ENCODE measurements at regions of chr17 and their contacts with region 1.

Region 1: GRCh38 chr17:68011199-68011665 is 15.0 kb upstream of the C17orf58 start:
- DNase-seq: peak in 8 of 9 experiments; percentile 45 to 75 (median 66)
- ATAC-seq: peak; percentile 57
- H3K4me3 ChIP-seq: peak overlapping the region; percentile 4 to 31
- H3K4me3 Mint-ChIP-seq: peak overlapping the region; percentile 50
- H3K27ac ChIP-seq: no peak overlapping the region
- H3K27ac Mint-ChIP-seq: no peak overlapping the region
- H3K4me1 ChIP-seq: no peaks in the 10 kb centered on the region
- H3K4me1 Mint-ChIP-seq: peaks cover 7% of the 10 kb centered on the region
- H3K27me3 ChIP-seq: no peaks in the 10 kb centered on the region
- H3K27me3 Mint-ChIP-seq: no peaks in the 10 kb centered on the region
- CTCF ChIP-seq: peak; percentile 77

Region 2: DNA sequence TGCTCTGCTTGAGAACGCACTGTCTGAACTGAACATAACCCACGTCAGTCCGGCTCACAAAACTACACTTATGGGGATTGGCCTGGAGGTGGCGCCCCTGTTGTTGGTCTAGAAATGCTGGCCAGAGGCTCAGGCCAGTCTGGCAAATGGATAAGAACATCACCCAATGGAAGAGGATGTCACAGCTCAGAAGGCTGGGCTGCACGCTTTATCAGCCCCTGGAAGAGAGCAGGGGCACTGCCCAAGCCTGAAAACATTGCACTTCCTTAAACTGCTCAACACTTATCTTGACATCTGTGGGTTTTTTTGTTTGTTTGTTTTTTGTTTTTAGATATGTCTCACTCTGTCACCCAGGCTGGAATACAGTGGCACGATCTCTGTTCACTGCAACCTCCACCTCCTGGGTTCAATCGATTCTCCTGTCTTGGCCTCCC is 210.7 kb before region 1 on chr17:
- CTCF ChIA-PET with region 1: no interaction called
- POLR2A ChIA-PET with region 1: no interaction called
- intact Hi-C with region 1: no loop called
- DNase-seq: peak in 8 of 9 experiments; percentile 29 to 62 (median 40)
- ATAC-seq: peak; percentile 49
- H3K4me3 ChIP-seq: no peak overlapping the region
- H3K4me3 Mint-ChIP-seq: no peak overlapping the region
- H3K27ac ChIP-seq: no peak overlapping the region
- H3K27ac Mint-ChIP-seq: no peak overlapping the region
- H3K4me1 ChIP-seq: no peaks in the 10 kb centered on the region
- H3K4me1 Mint-ChIP-seq: peaks cover 2% of the 10 kb centered on the region
- H3K27me3 ChIP-seq: no peaks in the 10 kb centered on the region
- H3K27me3 Mint-ChIP-seq: peaks cover 3% of the 10 kb centered on the region
- CTCF ChIP-seq: peak; percentile 46

Region 3: GRCh38 chr17:67974598-67975066 is 36.6 kb before region 1 on chr17:
- CTCF ChIA-PET with region 1: interaction called, 3 read pairs
- POLR2A ChIA-PET with region 1: no interaction called
- intact Hi-C with region 1: loop called in 1 of 2 experiments (anchors 2 kb)
- DNase-seq: no peak
- ATAC-seq: no peak
- H3K4me3 ChIP-seq: no peak overlapping the region
- H3K4me3 Mint-ChIP-seq: no peak overlapping the region
- H3K27ac ChIP-seq: no peak overlapping the region
- H3K27ac Mint-ChIP-seq: no peak overlapping the region
- H3K4me1 ChIP-seq: no peaks in the 10 kb centered on the region
- H3K4me1 Mint-ChIP-seq: no peaks in the 10 kb centered on the region
- H3K27me3 ChIP-seq: no peaks in the 10 kb centered on the region
- H3K27me3 Mint-ChIP-seq: no peaks in the 10 kb centered on the region
- CTCF ChIP-seq: no peak

Measured in CD8-positive, alpha-beta T cell (primary cell).